GM10248 (cell line): ENCODE measurements at regions of chr5 and their contacts with region 1.

Region 1: DNA sequence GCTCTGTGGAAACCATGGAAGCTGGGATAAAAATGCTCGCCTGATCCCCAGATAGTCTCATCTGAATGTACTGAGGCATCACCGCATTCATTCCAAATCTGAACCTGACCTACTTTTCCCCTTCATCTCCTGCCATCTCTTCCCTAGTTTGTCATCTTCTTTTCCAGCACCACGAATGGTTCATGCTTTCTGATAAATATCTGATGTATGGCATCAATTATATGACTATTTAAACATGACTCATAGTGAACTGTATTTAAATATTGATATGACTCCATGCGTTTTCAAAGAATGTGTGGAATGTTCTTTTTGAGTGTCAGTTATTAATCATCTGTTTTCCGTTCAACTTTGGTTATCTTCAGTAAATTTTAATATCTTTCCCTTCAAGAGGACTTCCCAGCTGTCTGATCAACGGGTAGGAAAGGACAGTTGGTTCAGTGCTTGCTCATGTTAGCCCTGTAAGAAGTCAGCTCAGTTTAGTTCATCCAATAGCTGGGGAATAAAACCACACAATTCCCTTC is 21.1 kb downstream of the BASP1 start:
- DNase-seq: no peak
- CTCF ChIP-seq: no peak

Region 2: GRCh38 chr5:16736158-16736995 is 502.2 kb before region 1 on chr5:
- CTCF ChIA-PET with region 1: no interaction called
- POLR2A ChIA-PET with region 1: no interaction called
- DNase-seq: no peak
- CTCF ChIP-seq: no peak

Region 3: GRCh38 chr5:17252498-17252897 is 13.9 kb after region 1 on chr5:
- CTCF ChIA-PET with region 1: interaction called, 33 read pairs
- POLR2A ChIA-PET with region 1: interaction called, 5 read pairs
- DNase-seq: no peak
- CTCF ChIP-seq: no peak

Region 4: GRCh38 chr5:17290055-17290974 is 51.7 kb after region 1 on chr5:
- CTCF ChIA-PET with region 1: no interaction called
- POLR2A ChIA-PET with region 1: no interaction called
- DNase-seq: no peak
- CTCF ChIP-seq: no peak